Activated B cell treated with CpG ODN at 0.5 μM for 24 hours (primary cell): ENCODE measurements at regions of chr12 and their contacts with region 1.

Region 1: DNA sequence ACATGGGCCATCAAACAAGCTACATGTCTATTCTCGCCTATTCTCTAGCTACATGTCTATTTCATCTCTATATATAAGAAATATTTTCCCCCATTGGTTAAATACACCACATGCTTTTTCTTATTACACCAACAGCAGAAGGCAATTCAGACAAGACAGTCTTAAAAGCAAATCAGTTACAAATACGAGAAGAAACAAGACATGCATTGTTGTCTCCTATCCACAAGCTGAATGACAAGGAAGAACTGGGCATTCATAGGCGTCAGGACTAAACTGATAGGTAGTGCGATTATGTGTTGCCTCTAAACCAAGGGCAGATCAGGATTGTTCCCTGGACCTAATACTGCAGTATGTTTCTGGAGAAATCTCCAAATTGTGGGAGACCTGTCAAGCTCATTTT is 19.4 kb downstream of the SLC2A13 start:
- DNase-seq: no peak
- ATAC-seq: no peak
- H3K4me3 Mint-ChIP-seq: no peak overlapping the region
- H3K27ac Mint-ChIP-seq: no peak overlapping the region
- H3K4me1 Mint-ChIP-seq: no peaks in the 10 kb centered on the region
- H3K27me3 Mint-ChIP-seq: no peaks in the 10 kb centered on the region
- CTCF ChIP-seq: no peak

Region 2: DNA sequence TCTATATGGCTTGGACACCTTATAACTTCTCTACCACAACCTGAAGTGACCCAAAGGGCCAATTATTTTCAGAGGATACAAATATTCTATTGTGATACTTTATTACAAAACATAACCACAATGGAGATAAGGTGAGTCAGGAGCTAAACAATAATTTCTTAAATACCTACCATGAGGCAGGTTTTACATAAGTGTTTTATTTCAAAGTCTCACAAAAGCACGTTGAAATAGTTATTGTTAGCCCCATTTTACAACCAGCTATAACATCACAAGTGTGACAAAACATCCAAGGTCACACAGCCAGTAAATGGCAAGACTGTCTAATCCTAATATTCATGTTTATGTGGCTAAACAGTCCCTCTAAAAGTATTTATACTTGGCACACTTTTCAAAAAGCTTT is 20.8 kb before region 1 on chr12:
- CTCF ChIA-PET with region 1: no interaction called
- POLR2A ChIA-PET with region 1: no interaction called
- intact Hi-C with region 1: loop called (anchors 2 kb)
- DNase-seq: no peak
- ATAC-seq: no peak
- H3K4me3 Mint-ChIP-seq: no peak overlapping the region
- H3K27ac Mint-ChIP-seq: no peak overlapping the region
- H3K4me1 Mint-ChIP-seq: no peaks in the 10 kb centered on the region
- H3K27me3 Mint-ChIP-seq: no peaks in the 10 kb centered on the region
- CTCF ChIP-seq: no peak

Region 3: GRCh38 chr12:40171501-40171900 is 85.0 kb after region 1 on chr12:
- CTCF ChIA-PET with region 1: no interaction called
- POLR2A ChIA-PET with region 1: no interaction called
- intact Hi-C with region 1: no loop called
- DNase-seq: no peak
- ATAC-seq: no peak
- H3K4me3 Mint-ChIP-seq: no peak overlapping the region
- H3K27ac Mint-ChIP-seq: peak overlapping the region; percentile 30
- H3K4me1 Mint-ChIP-seq: peaks cover 46% of the 10 kb centered on the region
- H3K27me3 Mint-ChIP-seq: no peaks in the 10 kb centered on the region
- CTCF ChIP-seq: no peak

Region 4: GRCh38 chr12:40325349-40325960 is 239.0 kb after region 1 on chr12:
- CTCF ChIA-PET with region 1: no interaction called
- POLR2A ChIA-PET with region 1: no interaction called
- intact Hi-C with region 1: no loop called
- DNase-seq: no peak
- ATAC-seq: peak; percentile 96
- H3K4me3 Mint-ChIP-seq: no peak overlapping the region
- H3K27ac Mint-ChIP-seq: no peak overlapping the region
- H3K4me1 Mint-ChIP-seq: peaks cover 13% of the 10 kb centered on the region
- H3K27me3 Mint-ChIP-seq: no peaks in the 10 kb centered on the region
- CTCF ChIP-seq: no peak